GM12878 (cell line): ENCODE measurements at regions of chr12 and their contacts with region 1.

Region 1: DNA sequence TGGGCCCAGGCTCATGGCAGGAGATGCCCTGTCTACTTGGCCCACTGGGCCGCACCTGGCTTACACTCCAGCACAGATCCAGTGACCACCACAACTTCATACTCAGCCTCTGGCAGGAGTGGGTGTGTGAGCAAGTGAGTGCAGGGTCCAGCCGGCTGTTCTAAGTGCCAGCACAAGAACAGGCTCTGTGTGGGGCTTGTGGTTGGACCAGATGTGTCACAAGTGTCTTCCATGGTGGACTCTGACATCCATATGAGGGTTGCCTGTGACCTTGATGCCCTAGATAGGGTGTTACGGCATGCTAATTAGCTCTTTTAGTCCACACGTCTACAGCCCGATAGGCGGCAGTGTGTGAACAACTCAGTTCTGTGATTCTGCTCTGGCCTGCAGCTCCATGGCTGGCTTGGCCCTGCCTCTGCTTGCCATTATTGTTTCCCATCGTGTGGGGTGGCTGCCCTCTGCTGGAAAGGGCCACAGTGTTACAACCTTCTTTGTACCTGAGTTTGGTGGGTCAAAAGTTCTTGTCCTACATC is 1089.1 kb downstream of the SLC6A15 start:
- DNase-seq: no peak
- ATAC-seq: peak; percentile 97
- H3K4me3 ChIP-seq: no peak overlapping the region
- H3K27ac ChIP-seq: no peak overlapping the region
- H3K4me1 ChIP-seq: no peaks in the 10 kb centered on the region
- H3K27me3 ChIP-seq: no peaks in the 10 kb centered on the region
- CTCF ChIP-seq: peak; percentile 64 to 72 (median 71)
- EP300 ChIP-seq: no peak
- POLR2A ChIP-seq: no peak
- RAD21 ChIP-seq: peak; percentile 79

Region 2: GRCh38 chr12:82527165-82527780 is 1296.2 kb before region 1 on chr12:
- CTCF ChIA-PET with region 1: interaction called, 8 read pairs
- POLR2A ChIA-PET with region 1: no interaction called
- RAD21 ChIA-PET with region 1: interaction called, 6 read pairs
- SMC1A ChIA-PET with region 1: interaction called, 3 read pairs
- in situ Hi-C with region 1: loop called (anchors 10 kb)
- intact Hi-C with region 1: loop called (anchors 2 kb)
- DNase-seq: no peak
- ATAC-seq: peak; percentile 80
- H3K4me3 ChIP-seq: no peak overlapping the region
- H3K27ac ChIP-seq: no peak overlapping the region
- H3K4me1 ChIP-seq: no peaks in the 10 kb centered on the region
- H3K27me3 ChIP-seq: no peaks in the 10 kb centered on the region
- CTCF ChIP-seq: peak; percentile 83 to 92 (median 84)
- EP300 ChIP-seq: no peak
- POLR2A ChIP-seq: no peak
- RAD21 ChIP-seq: peak; percentile 97

Region 3: GRCh38 chr12:83016218-83016835 is 807.2 kb before region 1 on chr12:
- CTCF ChIA-PET with region 1: no interaction called
- POLR2A ChIA-PET with region 1: no interaction called
- RAD21 ChIA-PET with region 1: no interaction called
- SMC1A ChIA-PET with region 1: no interaction called
- in situ Hi-C with region 1: loop called (anchors 25 kb)
- intact Hi-C with region 1: no loop called
- DNase-seq: no peak
- ATAC-seq: no peak
- H3K4me3 ChIP-seq: no peak overlapping the region
- H3K27ac ChIP-seq: no peak overlapping the region
- H3K4me1 ChIP-seq: no peaks in the 10 kb centered on the region
- H3K27me3 ChIP-seq: no peaks in the 10 kb centered on the region
- CTCF ChIP-seq: no peak
- EP300 ChIP-seq: no peak
- POLR2A ChIP-seq: no peak
- RAD21 ChIP-seq: no peak

Region 4: DNA sequence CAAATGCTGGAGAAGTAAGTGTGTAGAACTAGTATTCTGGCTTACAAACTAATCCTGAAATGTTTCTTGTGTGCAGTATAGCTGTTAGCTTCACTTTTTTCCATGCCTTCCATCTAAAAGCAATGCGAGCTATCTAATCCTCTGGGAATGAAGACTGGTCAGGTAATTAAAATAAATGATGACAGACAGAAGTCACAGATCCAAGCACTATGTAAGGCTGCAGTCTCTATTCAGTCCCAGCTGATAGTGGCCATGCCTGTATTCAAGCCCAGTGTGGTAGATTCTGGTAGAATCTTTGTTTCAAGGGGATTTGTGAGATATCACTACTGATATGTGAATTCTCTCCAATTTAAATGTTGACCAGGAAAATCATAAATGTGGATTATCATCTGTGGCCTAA is 499.6 kb before region 1 on chr12:
- CTCF ChIA-PET with region 1: no interaction called
- POLR2A ChIA-PET with region 1: no interaction called
- RAD21 ChIA-PET with region 1: no interaction called
- SMC1A ChIA-PET with region 1: no interaction called
- in situ Hi-C with region 1: no loop called
- intact Hi-C with region 1: no loop called
- DNase-seq: no peak
- ATAC-seq: no peak
- H3K4me3 ChIP-seq: no peak overlapping the region
- H3K27ac ChIP-seq: no peak overlapping the region
- H3K4me1 ChIP-seq: no peaks in the 10 kb centered on the region
- H3K27me3 ChIP-seq: no peaks in the 10 kb centered on the region
- CTCF ChIP-seq: no peak
- EP300 ChIP-seq: no peak
- POLR2A ChIP-seq: no peak
- RAD21 ChIP-seq: no peak

Region 5: GRCh38 chr12:83856803-83857202 is 33.3 kb after region 1 on chr12:
- CTCF ChIA-PET with region 1: no interaction called
- POLR2A ChIA-PET with region 1: no interaction called
- RAD21 ChIA-PET with region 1: no interaction called
- SMC1A ChIA-PET with region 1: no interaction called
- in situ Hi-C with region 1: no loop called
- intact Hi-C with region 1: no loop called
- DNase-seq: no peak
- ATAC-seq: no peak
- H3K4me3 ChIP-seq: no peak overlapping the region
- H3K27ac ChIP-seq: no peak overlapping the region
- H3K4me1 ChIP-seq: no peaks in the 10 kb centered on the region
- H3K27me3 ChIP-seq: no peaks in the 10 kb centered on the region
- CTCF ChIP-seq: no peak
- EP300 ChIP-seq: no peak
- POLR2A ChIP-seq: no peak
- RAD21 ChIP-seq: no peak

Region 6: GRCh38 chr12:83985068-83985467 is 161.6 kb after region 1 on chr12:
- CTCF ChIA-PET with region 1: interaction called, 6 read pairs
- POLR2A ChIA-PET with region 1: no interaction called
- RAD21 ChIA-PET with region 1: no interaction called
- SMC1A ChIA-PET with region 1: interaction called, 10 read pairs
- in situ Hi-C with region 1: no loop called
- intact Hi-C with region 1: no loop called
- DNase-seq: no peak
- ATAC-seq: no peak
- H3K4me3 ChIP-seq: no peak overlapping the region
- H3K27ac ChIP-seq: no peak overlapping the region
- H3K4me1 ChIP-seq: no peaks in the 10 kb centered on the region
- H3K27me3 ChIP-seq: no peaks in the 10 kb centered on the region
- CTCF ChIP-seq: no peak
- EP300 ChIP-seq: no peak
- POLR2A ChIP-seq: no peak
- RAD21 ChIP-seq: no peak

Region 7: GRCh38 chr12:84201976-84202375 is 378.5 kb after region 1 on chr12:
- CTCF ChIA-PET with region 1: no interaction called
- POLR2A ChIA-PET with region 1: no interaction called
- RAD21 ChIA-PET with region 1: no interaction called
- SMC1A ChIA-PET with region 1: no interaction called
- in situ Hi-C with region 1: no loop called
- intact Hi-C with region 1: no loop called
- DNase-seq: no peak
- ATAC-seq: no peak
- H3K4me3 ChIP-seq: no peak overlapping the region
- H3K27ac ChIP-seq: no peak overlapping the region
- H3K4me1 ChIP-seq: no peaks in the 10 kb centered on the region
- H3K27me3 ChIP-seq: no peaks in the 10 kb centered on the region
- CTCF ChIP-seq: no peak
- EP300 ChIP-seq: no peak
- POLR2A ChIP-seq: no peak
- RAD21 ChIP-seq: no peak

Region 8: DNA sequence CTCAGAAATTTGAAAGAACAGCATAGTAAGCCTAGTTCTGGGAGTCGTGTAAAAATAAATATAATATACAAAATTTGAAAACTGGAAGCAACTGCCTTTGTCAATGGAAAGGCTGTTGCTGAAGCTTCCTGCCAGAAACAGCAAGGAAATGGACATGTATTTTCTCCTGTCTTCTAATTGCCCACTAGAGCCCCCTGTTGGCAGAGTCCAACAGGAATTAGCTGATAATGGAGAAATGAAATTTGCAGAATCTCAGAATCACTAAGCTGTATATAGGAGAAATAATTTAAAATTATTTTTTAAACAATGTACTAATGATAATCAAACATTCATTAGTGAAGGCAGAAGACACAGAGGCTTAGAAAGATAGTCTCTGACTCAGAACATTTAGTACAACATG is 674.3 kb after region 1 on chr12:
- CTCF ChIA-PET with region 1: interaction called, 82 read pairs
- POLR2A ChIA-PET with region 1: no interaction called
- RAD21 ChIA-PET with region 1: interaction called, 22 read pairs
- SMC1A ChIA-PET with region 1: interaction called, 16 read pairs
- in situ Hi-C with region 1: loop called (anchors 10 kb)
- intact Hi-C with region 1: loop called (anchors 1 kb)
- DNase-seq: no peak
- ATAC-seq: peak; percentile 47; the same call in 2 of the 3 replicates
- H3K4me3 ChIP-seq: no peak overlapping the region
- H3K27ac ChIP-seq: no peak overlapping the region
- H3K4me1 ChIP-seq: no peaks in the 10 kb centered on the region
- H3K27me3 ChIP-seq: no peaks in the 10 kb centered on the region; a peak in 1 of 4 replicates
- CTCF ChIP-seq: peak; percentile 47 to 59 (median 56); a peak in 5 of 6 replicates
- EP300 ChIP-seq: no peak
- POLR2A ChIP-seq: no peak
- RAD21 ChIP-seq: peak; percentile 63